Mammary epithelial cell (primary cell): ENCODE measurements at regions of chr22 and their contacts with region 1.

Region 1: DNA sequence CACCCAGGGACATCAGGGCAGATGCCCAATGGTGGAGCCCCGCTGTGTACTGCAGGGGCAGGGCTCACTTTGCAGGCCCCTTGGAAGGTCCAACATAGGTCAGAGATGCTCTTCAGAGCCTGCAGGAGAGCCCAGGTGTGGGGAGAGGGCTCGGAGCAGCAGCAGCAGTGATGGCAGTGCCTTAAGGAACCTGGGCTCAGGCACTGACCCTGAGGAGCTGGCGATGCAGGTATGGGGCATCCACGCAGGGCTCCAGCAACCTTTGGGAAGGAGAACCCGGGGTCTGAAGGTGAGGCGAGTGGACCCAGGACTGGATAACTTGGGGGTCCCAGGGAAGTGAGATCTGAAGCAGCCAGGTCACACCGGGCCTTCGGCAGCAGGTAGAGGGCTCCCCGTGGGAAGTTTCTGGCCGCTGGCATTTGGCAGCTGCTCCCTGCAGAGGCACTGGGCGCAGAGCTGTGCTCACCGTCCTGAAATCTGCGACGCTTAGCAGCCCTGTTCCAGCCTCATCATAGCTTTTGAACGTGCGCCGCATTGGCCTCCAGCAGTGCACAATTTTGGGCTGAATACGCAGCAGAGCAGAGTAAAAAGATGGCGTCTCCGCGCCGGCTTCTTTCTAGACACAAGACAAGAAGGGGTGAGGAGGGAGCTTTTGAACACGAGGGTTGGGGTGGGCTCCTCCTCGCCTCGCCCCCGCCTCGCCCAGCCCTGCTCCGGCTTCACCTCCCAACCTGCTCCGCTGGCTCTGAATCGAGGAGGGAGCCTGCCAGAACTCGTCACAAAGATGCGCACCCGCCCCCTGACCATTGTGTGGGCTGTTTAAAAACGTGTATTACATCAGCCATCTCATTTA is 118.8 kb downstream of the MPPED1 start:
- DNase-seq: peak; percentile 43
- H3K4me3 ChIP-seq: peak overlapping the region in 2 of 3 experiments; percentile 7 to 23
- H3K27ac ChIP-seq: peak overlapping the region; percentile 32
- H3K4me1 ChIP-seq: peaks cover 45% of the 10 kb centered on the region
- H3K27me3 ChIP-seq: no peaks in the 10 kb centered on the region
- CTCF ChIP-seq: no peak

Region 2: DNA sequence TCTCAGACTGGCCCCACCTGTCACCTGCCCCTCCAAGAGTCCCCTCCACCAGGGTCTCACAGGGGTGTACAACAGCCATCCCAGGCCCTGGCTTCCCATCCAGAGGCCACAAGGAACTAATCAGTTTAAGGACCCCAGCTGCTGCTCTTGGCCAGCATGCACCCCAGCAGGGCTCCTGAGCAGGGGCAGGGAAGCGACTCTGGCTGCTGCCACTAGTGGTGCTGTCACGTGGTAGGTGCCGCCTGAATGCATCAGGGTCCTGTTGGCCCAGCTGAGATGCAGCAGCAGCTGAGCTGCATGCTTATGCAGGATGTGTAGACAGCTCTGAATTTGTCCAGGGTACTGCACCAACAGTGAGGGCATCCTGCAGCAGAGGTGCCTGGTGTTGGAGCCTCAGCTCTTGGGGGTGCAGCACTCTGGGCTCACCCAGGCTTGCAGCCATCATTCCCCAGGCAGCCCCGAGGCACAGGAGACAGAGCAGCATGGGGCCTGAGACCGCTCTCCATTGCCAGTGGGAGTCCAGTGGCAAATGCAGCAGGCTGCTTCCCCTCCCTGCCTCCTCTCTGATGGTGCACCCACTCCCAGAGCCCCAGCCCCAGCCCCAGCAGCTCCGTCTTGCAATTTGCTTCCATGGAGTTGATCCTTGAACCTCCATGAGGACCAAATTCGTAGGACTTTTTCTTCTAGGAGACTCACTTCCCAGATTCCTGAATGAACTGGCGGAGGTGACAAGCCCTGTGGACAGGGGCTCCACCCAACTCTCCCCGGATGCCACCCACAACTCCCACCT is 20.1 kb before region 1 on chr22:
- CTCF ChIA-PET with region 1: no interaction called
- dilution Hi-C with region 1: no loop called
- in situ Hi-C with region 1: no loop called
- intact Hi-C with region 1: loop called (anchors 1 kb)
- DNase-seq: no peak
- H3K4me3 ChIP-seq: no peak overlapping the region
- H3K27ac ChIP-seq: no peak overlapping the region
- H3K4me1 ChIP-seq: peaks cover 22% of the 10 kb centered on the region
- H3K27me3 ChIP-seq: no peaks in the 10 kb centered on the region
- CTCF ChIP-seq: no peak